Upper lobe of right lung (tissue), 1 donor: ENCODE measurements at regions of chr7 and their contacts with region 1.

Region 1: GRCh38 chr7:129825496-129826267 is 127.1 kb downstream of the UBE2H start:
- DNase-seq: peak; percentile 95
- ATAC-seq: peak; percentile 94
- H3K4me3 ChIP-seq: peak overlapping the region; percentile 58
- H3K27ac ChIP-seq: peak overlapping the region; percentile 42
- H3K4me1 ChIP-seq: peaks cover 20% of the 10 kb centered on the region
- H3K27me3 ChIP-seq: no peaks in the 10 kb centered on the region
- CTCF ChIP-seq: peak; percentile 98

Region 2: DNA sequence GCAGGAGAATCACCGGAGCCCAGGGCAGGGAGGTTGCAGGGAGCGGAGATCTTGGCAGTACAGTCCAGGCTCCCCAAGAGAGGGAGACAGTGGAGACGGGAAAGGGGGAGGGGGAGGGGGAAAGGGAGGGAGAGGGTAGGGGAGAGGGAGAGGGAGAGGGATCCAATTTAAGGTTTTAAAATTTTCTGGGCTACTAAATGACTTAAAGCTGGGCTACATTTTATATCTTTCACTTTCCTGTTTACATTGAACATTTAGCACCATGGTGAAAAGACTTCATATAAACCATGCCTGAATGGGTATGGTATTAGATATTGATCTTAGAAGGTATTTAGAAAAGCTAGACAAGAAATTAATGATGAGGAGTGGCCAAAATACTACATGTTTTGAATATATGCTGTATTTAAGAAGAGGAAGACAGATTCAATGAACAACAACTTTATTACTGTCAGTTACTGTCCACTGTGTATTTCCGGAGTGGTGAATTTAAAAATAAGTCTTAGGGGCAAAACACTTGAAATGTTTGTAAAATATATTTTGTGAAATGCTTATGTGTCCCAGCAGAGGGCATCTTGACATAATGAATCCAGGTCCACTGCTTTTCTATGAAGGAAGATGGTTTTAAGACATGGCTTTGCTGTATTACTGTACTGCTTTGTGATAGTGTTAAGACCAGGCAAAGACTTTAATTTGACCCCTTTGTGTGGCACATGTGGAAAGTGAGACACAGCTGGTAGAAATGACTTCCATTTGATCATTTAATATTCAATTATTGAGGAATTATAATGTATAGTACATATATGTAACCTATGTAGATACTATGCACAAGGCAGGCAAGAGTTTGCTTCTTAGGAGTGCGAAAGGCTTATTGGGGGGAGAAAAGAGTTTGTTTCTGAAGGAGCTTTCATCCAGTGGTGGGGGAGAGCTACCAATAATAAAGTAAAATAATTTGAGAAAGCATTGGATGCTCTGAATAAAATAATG is 161.4 kb before region 1 on chr7:
- intact Hi-C with region 1: loop called (anchors 10 kb)
- DNase-seq: no peak
- ATAC-seq: peak; percentile 61
- H3K4me3 ChIP-seq: no peak overlapping the region
- H3K27ac ChIP-seq: no peak overlapping the region
- H3K4me1 ChIP-seq: no peaks in the 10 kb centered on the region
- H3K27me3 ChIP-seq: no peaks in the 10 kb centered on the region
- CTCF ChIP-seq: peak; percentile 39

Region 3: GRCh38 chr7:130010689-130011412 is 185.2 kb after region 1 on chr7:
- intact Hi-C with region 1: loop called (anchors 10 kb)
- DNase-seq: peak; percentile 70
- ATAC-seq: peak; percentile 87
- H3K4me3 ChIP-seq: no peak overlapping the region
- H3K27ac ChIP-seq: no peak overlapping the region
- H3K4me1 ChIP-seq: peaks cover 10% of the 10 kb centered on the region
- H3K27me3 ChIP-seq: no peaks in the 10 kb centered on the region
- CTCF ChIP-seq: peak; percentile 90